ENCODE measurements at regions of chr11 and their contacts with region 1.

Region 1: DNA sequence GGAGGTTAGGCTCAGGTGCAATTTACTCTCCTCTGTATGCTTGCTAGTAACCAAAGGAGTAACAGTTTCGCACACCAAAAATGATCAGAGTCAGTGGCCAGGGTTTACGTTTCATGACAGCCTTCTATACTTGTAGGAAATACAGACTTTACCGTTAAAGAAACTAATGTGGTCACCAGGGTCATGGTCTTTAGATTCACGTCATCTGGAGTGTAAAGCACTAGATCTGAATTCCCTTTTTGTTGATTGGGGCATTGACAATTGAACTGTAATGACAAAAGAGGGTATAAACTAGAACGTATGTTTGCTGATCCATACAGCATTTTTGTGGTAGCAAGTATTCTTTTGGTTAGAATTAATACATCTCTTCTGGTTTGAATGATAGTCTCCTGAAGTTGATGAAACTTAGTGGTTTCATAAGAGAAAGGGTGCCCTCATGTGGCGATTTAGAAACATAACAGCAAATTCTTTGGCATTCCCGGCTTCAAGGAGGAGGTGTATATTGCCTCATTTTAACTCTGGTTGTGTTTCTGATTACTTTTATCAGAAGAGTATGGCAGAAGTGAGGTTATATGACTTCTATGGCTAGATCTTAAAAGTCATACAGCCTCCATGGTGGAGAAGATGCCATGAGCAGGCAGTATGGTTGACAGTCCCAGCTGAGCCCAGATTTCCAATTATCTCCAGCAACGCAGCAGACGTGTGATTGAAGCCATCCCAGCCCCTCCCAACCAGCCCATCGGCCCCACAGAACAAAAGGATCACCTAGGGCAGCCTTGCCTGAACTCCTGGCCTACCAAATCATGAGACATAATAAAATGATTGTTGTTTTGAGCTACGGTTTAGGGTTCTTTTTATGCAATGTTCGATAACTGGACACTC is 35.1 kb downstream of the MMP7 start:
- DNase-seq: peak in 6 of 7 donors; percentile 30 to 62 (median 36)
- H3K4me3 ChIP-seq: no peak overlapping the region
- H3K27ac ChIP-seq: no peak overlapping the region
- H3K4me1 ChIP-seq: no peaks in the 10 kb centered on the region
- H3K27me3 ChIP-seq: no peaks in the 10 kb centered on the region
- CTCF ChIP-seq: peak; percentile 48 to 88 (median 75)
- POLR2A ChIP-seq: no peak

Region 2: GRCh38 chr11:102269927-102270326 is 225.5 kb before region 1 on chr11:
- intact Hi-C with region 1: no loop called
- DNase-seq: no peak
- H3K4me3 ChIP-seq: no peak overlapping the region
- H3K27ac ChIP-seq: no peak overlapping the region
- H3K4me1 ChIP-seq: peaks cover 3 to 4% of the 10 kb centered on the region in 2 donors
- H3K27me3 ChIP-seq: no peaks in the 10 kb centered on the region
- CTCF ChIP-seq: no peak
- POLR2A ChIP-seq: no peak

Region 3: GRCh38 chr11:102287964-102288724 is 207.3 kb before region 1 on chr11:
- intact Hi-C with region 1: loop called in 1 of 2 experiments (anchors 10 kb)
- DNase-seq: peak; percentile 32 to 75 (median 47)
- H3K4me3 ChIP-seq: peak overlapping the region in 1 of 4 donors; percentile 39
- H3K27ac ChIP-seq: no peak overlapping the region
- H3K4me1 ChIP-seq: peaks cover 0 to 14% of the 10 kb centered on the region in 2 donors
- H3K27me3 ChIP-seq: no peaks in the 10 kb centered on the region
- CTCF ChIP-seq: peak; percentile 72 to 86 (median 79)
- POLR2A ChIP-seq: no peak

Region 4: DNA sequence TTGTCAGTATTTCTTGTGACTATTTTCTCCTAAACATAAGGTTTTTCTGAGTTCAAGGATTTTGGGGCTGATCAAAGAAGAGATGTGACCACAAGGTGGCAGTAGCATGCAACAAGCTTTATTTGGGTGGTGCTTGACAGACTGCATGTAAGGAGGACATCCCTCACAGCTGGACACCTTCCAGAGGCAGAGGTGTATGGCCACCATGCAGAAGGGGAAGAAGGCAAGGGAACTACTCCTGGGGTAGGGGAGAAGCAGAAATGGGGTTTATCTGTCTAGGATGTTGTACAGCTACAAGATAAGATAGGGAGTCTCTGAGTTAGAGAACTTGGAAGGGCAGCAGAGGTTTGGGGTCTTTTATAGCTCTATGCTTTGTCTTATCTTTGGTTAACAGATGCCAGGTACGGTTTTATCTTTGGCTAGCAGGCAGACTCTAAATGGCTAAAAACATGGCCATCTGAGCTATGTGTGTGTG is 153.5 kb before region 1 on chr11:
- intact Hi-C with region 1: loop called (anchors 5 kb)
- DNase-seq: peak; percentile 78 to 92 (median 81)
- H3K4me3 ChIP-seq: no peak overlapping the region
- H3K27ac ChIP-seq: no peak overlapping the region
- H3K4me1 ChIP-seq: peaks cover 0 to 10% of the 10 kb centered on the region in 2 donors
- H3K27me3 ChIP-seq: no peaks in the 10 kb centered on the region
- CTCF ChIP-seq: peak; percentile 74 to 90 (median 84)
- POLR2A ChIP-seq: no peak